H1 (cell line): ENCODE measurements at regions of chr2 and their contacts with region 1.

Region 1: DNA sequence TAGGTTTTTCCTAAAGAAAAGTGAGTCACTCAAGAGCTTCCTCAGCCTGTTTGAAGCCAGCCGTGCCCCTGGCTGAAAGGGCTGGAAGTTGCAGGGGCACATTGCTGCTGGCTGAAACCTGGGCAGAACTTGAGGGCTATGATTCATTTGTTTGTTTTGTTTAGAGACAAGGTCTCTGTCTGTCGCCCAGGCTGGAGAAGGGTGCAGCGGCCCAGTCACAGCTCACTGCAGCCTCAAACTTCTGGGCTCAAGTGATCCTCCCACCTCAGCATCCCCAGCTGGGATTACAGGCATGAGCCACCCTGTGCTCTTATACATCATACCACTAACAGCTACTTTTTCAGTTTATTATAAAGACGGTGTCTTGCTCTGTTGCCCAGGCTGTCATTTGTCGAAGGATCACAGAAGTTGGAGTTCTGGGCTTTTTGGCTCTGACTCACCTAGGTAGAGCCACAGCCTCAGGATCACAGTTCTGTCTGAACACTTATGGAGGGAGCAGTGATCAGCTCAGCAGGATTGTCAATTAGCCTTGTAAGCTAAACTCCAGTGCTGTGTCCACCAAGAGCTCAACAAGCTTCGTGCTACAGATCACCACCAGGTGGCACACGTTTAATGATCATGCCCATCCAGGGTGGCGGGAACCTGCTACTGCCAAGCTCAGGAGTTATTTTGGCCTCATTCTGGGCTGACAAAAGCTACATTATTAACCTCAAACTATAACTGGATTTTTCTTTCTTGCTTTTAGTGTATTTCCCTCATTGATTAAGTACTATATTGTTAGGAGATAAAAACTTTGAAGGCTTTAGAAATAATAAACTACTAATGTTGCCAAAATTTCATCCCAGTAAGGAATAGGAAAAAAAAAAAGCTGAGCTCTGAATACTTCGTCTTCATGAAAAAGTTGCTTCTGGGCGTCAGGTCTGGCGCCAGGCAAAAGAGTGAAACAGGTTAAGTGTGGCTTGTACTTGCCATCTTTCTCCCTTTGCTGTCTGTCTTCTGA is 57.9 kb downstream of the ARHGEF33 start:
- DNase-seq: peak; percentile 43 to 80
- H3K4me3 ChIP-seq: no peak overlapping the region
- H3K27ac ChIP-seq: no peak overlapping the region
- H3K4me1 ChIP-seq: peaks cover 0 to 2% (median 1%) of the 10 kb centered on the region in 4 experiments; a peak in 2 of 7 replicates
- H3K27me3 ChIP-seq: no peaks in the 10 kb centered on the region
- CTCF ChIP-seq: peak; percentile 76 to 90 (median 85)
- EP300 ChIP-seq: no peak
- POLR2A ChIP-seq: no peak
- RAD21 ChIP-seq: peak; percentile 84 to 87

Region 2: GRCh38 chr2:38907743-38908562 is 39.6 kb before region 1 on chr2:
- CTCF ChIA-PET with region 1: interaction called, 11 read pairs
- POLR2A ChIA-PET with region 1: no interaction called
- DNase-seq: no peak
- H3K4me3 ChIP-seq: no peak overlapping the region
- H3K27ac ChIP-seq: no peak overlapping the region
- H3K4me1 ChIP-seq: no peaks in the 10 kb centered on the region
- H3K27me3 ChIP-seq: no peaks in the 10 kb centered on the region
- CTCF ChIP-seq: no peak
- EP300 ChIP-seq: no peak
- POLR2A ChIP-seq: no peak
- RAD21 ChIP-seq: no peak

Region 3: GRCh38 chr2:38935568-38936172 is 11.9 kb before region 1 on chr2:
- CTCF ChIA-PET with region 1: interaction called, 17 read pairs
- POLR2A ChIA-PET with region 1: no interaction called
- DNase-seq: no peak
- H3K4me3 ChIP-seq: no peak overlapping the region
- H3K27ac ChIP-seq: no peak overlapping the region
- H3K4me1 ChIP-seq: no peaks in the 10 kb centered on the region
- H3K27me3 ChIP-seq: no peaks in the 10 kb centered on the region
- CTCF ChIP-seq: no peak
- EP300 ChIP-seq: no peak
- POLR2A ChIP-seq: no peak
- RAD21 ChIP-seq: no peak

Region 4: DNA sequence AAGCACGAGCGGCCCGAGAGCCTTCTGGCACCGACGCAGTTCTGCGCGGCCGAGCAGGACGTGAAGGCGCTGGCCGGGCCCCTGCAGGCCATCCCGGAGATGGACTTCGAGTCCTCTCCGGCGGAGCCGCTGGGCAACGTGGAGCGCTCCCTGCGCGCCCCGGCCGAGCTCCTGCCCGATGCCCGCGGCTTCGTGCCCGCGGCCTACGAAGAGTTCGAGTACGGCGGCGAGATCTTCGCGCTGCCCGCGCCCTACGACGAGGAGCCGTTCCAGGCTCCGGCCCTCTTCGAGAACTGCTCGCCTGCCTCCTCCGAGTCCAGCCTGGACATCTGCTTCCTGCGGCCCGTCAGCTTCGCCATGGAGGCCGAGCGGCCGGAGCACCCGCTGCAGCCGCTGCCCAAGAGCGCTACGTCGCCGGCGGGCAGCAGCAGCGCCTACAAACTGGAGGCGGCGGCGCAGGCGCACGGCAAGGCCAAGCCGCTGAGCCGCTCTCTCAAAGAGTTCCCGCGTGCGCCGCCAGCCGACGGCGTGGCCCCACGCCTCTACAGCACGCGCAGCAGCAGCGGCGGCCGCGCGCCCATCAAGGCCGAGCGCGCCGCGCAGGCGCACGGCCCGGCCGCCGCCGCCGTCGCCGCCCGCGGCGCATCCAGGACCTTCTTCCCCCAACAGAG is 12.5 kb after region 1 on chr2:
- CTCF ChIA-PET with region 1: interaction called, 48 read pairs
- POLR2A ChIA-PET with region 1: interaction called, 5 read pairs
- DNase-seq: peak; percentile 68 to 76
- H3K4me3 ChIP-seq: peak overlapping the region; percentile 25 to 54 (median 34)
- H3K27ac ChIP-seq: no peak overlapping the region
- H3K4me1 ChIP-seq: peaks cover 0 to 5% (median under 1%) of the 10 kb centered on the region in 4 experiments; a peak in 1 of 7 replicates
- H3K27me3 ChIP-seq: peaks cover 2 to 28% (median 23%) of the 10 kb centered on the region in 4 experiments
- CTCF ChIP-seq: no peak; a peak in 1 of 4 replicates
- EP300 ChIP-seq: no peak
- POLR2A ChIP-seq: no peak
- RAD21 ChIP-seq: no peak; a peak in 1 of 4 replicates

Region 5: GRCh38 chr2:39008665-39009064 is 61.1 kb after region 1 on chr2:
- CTCF ChIA-PET with region 1: interaction called, 14 read pairs
- POLR2A ChIA-PET with region 1: no interaction called
- DNase-seq: no peak
- H3K4me3 ChIP-seq: no peak overlapping the region
- H3K27ac ChIP-seq: no peak overlapping the region
- H3K4me1 ChIP-seq: peaks cover 0 to 3% (median 0%) of the 10 kb centered on the region in 4 experiments; a peak in 1 of 7 replicates
- H3K27me3 ChIP-seq: no peaks in the 10 kb centered on the region
- CTCF ChIP-seq: no peak
- EP300 ChIP-seq: no peak
- POLR2A ChIP-seq: no peak
- RAD21 ChIP-seq: no peak